A673 (cell line): ENCODE measurements at regions of chr6 and their contacts with region 1.

Region 1: DNA sequence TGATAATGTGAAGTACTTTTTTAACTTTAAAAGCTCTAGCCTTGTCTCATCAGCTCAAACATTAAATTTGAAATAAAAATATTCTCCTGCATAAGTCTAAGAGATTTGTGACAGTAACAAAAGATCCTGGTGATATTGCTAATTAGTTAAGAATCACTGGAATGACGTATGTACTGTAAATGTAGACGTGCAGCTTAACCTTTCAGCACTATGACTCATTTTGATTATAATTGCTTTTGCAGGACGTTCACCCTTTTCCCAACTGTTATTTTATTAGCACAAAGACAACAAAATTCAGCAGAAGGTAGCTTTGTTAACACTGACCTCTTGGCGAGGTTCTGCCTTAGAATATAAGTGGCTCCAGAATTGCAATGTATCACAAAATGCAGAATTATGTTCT is 68.6 kb downstream of the TENT5A start:
- DNase-seq: peak; percentile 51
- H3K4me3 ChIP-seq: no peak overlapping the region
- H3K27ac ChIP-seq: peak overlapping the region; percentile 96
- H3K4me1 ChIP-seq: peaks cover 50% of the 10 kb centered on the region
- H3K27me3 ChIP-seq: no peaks in the 10 kb centered on the region
- CTCF ChIP-seq: no peak

Region 2: GRCh38 chr6:81241126-81242041 is 442.5 kb before region 1 on chr6:
- CTCF ChIA-PET with region 1: no interaction called
- POLR2A ChIA-PET with region 1: no interaction called
- intact Hi-C with region 1: loop called (anchors 5 kb)
- DNase-seq: peak; percentile 73
- H3K4me3 ChIP-seq: no peak overlapping the region
- H3K27ac ChIP-seq: no peak overlapping the region
- H3K4me1 ChIP-seq: no peaks in the 10 kb centered on the region
- H3K27me3 ChIP-seq: no peaks in the 10 kb centered on the region
- CTCF ChIP-seq: peak; percentile 67

Region 3: GRCh38 chr6:81614292-81614691 is 69.6 kb before region 1 on chr6:
- CTCF ChIA-PET with region 1: no interaction called
- POLR2A ChIA-PET with region 1: no interaction called
- intact Hi-C with region 1: loop called (anchors 5 kb)
- DNase-seq: peak; percentile 92
- H3K4me3 ChIP-seq: peak overlapping the region; percentile 13
- H3K27ac ChIP-seq: peak overlapping the region; percentile 89
- H3K4me1 ChIP-seq: peaks cover 34% of the 10 kb centered on the region
- H3K27me3 ChIP-seq: no peaks in the 10 kb centered on the region
- CTCF ChIP-seq: no peak

Region 4: DNA sequence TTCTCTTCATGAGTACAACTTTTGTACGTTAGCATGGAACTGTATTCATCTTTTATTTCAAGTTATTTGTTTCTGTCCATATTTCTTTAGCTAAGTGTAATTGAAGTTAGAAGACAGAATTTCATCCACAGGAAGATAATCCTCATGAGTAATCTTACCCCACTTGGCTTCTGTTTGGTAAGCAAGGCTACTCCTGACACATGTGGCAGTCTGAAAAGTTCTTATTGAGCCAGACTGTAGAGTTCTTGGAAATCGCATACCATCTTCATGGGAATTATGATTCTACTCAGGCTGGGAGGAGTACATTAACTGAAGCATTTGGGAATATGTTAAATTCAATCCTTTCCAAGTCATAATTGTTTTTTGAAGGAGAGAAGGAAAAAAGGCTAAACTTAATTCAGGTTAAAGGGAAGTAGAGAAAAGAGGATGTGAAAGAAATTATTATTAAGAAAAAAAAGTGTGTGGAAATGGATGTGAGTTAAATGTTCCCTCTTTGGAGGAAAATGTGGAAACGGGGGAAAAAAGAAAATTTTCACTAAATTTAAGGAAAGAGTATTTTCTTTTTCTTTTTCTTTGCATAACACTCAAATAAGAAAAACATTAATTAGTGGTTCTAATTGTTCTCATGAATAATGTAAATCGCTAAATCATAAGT is 110.0 kb after region 1 on chr6:
- CTCF ChIA-PET with region 1: no interaction called
- POLR2A ChIA-PET with region 1: no interaction called
- intact Hi-C with region 1: loop called (anchors 2 kb)
- DNase-seq: peak; percentile 65
- H3K4me3 ChIP-seq: no peak overlapping the region
- H3K27ac ChIP-seq: no peak overlapping the region
- H3K4me1 ChIP-seq: peaks cover 27% of the 10 kb centered on the region
- H3K27me3 ChIP-seq: no peaks in the 10 kb centered on the region
- CTCF ChIP-seq: no peak

Region 5: DNA sequence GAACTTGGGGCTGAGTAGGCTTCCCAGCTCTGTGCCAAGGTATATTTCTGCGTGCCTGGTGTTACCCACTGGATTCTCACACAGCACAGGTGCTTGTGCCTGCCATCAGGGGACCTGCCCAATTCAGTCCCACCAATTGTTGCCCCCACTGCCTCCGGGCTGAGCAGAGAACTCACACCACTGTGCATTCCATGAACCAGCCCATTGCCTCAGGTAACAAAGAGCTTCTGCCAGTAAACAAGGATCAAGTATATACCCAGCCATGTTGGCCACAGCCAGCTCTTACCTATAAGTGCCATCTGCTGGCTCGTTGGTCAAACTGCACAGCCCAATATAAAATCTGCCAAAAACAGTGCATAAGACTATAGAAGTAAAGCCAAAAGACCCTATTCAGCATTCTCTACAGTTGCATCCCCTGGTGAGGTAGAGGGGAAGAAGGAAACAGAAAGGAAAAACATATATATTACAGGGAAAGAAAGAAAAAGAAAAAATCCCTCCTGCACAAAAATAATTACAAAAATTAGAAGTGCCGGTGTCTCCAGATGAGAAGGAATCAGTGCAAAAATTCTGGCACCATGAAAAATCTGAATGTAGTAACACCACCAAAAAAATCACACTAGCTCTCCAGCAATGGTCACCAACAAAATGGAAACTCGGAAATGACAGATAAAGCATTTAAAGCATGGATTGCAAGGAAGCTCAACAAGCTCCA is 322.3 kb after region 1 on chr6:
- CTCF ChIA-PET with region 1: no interaction called
- POLR2A ChIA-PET with region 1: no interaction called
- intact Hi-C with region 1: loop called (anchors 10 kb)
- DNase-seq: peak; percentile 72
- H3K4me3 ChIP-seq: no peak overlapping the region
- H3K27ac ChIP-seq: no peak overlapping the region
- H3K4me1 ChIP-seq: peaks cover 6% of the 10 kb centered on the region
- H3K27me3 ChIP-seq: no peaks in the 10 kb centered on the region
- CTCF ChIP-seq: peak; percentile 77

Region 6: DNA sequence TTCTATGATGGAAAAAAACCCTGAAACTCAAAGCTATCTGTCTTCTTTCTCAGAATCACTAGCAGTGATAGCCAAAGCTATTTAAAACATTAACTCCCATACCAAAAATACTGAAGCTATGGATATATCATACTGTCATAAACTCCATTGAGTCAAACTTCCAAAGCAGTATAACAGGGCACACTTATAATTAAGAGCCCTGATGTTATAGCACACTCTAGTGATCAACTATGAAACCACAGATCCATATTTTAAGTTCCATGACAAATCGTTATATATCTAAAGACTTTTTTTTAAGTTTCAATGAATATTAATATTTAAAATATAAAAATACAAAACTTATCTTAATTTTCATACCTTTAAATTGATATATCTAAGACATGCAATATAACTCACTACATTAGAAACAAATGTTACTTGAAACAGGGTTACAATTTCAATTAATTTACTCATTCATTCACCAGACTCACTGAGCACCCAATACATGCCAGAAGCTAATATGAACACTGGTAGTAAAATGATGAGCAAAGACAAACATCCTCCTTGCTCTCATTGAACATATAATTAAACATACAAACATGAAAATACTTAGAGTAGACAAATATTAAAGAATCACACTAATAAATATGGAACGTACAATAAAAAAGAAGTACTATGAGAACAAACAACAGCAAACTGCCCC is 494.3 kb after region 1 on chr6:
- CTCF ChIA-PET with region 1: no interaction called
- POLR2A ChIA-PET with region 1: no interaction called
- intact Hi-C with region 1: loop called (anchors 2 kb)
- DNase-seq: peak; percentile 74
- H3K4me3 ChIP-seq: no peak overlapping the region
- H3K27ac ChIP-seq: no peak overlapping the region
- H3K4me1 ChIP-seq: peaks cover 48% of the 10 kb centered on the region
- H3K27me3 ChIP-seq: no peaks in the 10 kb centered on the region
- CTCF ChIP-seq: peak; percentile 78

Region 7: DNA sequence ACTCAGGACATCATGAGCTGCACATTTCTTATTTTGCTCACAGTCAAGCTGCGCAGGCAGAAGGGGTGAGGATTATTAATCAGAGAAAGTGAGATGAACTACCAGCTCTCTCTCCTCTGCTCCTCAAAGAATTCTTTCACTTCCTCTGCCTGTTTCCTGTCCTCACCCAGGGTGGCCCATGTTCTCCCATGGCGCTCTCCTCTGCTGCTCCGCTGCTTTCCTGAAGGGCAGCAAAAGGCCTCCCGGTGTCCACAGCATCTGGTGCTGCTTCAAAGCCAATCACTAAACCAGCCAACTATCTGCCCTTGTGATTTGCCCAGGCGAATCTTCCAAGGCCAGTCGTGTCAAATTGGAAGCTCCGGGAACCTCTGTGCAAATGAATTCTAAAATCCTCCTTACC is 1003.9 kb after region 1 on chr6:
- CTCF ChIA-PET with region 1: no interaction called
- POLR2A ChIA-PET with region 1: no interaction called
- intact Hi-C with region 1: loop called (anchors 5 kb)
- DNase-seq: peak; percentile 98
- H3K4me3 ChIP-seq: peak overlapping the region; percentile 20
- H3K27ac ChIP-seq: peak overlapping the region; percentile 96
- H3K4me1 ChIP-seq: peaks cover 65% of the 10 kb centered on the region
- H3K27me3 ChIP-seq: no peaks in the 10 kb centered on the region
- CTCF ChIP-seq: no peak